Heart left ventricle (tissue), 16 donors: ENCODE measurements at regions of chr4 and their contacts with region 1.

Region 1: DNA sequence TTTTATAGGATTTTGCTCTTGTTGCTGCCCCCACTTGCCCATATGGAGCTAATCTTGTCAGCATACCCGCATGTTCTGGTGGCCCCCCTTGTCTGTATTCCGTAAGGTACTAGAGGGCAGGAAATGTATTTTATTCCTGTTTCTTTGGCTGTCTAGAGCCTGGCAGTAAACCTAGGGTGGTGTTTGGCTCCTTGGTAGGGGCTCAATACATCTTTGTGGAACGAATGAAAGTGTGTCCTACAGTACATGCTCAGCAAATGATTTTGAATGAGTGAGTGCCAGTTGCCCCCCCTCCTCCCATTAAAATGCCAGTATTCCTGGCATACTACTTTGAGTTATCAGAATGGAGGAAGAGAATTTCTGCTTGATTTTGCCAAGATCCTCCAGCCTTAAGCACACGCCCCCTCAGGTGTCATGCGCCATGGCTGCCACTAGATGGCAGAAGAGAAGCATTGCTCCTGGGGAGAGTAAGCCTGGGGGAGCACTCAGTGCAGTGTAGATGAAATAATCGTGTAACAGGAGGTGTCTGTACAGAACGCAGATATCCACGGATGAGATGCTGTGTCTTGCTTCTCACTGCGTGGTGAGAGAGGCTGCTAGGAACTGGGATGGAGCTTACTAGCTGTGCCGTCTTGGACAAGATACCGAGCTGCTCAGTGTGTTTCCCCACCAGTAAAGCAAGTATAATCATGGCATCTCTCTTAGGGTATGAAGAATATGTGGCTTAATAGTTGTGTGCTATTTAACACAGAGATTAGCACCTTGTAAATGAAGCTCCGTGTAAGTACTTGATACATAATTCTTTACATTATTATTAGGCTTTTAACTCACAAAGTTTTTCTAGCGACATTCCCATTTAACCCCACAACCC is 17.2 kb upstream of the RNF212 start:
- DNase-seq: peak in 4 of 5 donors; percentile 51 to 66 (median 56)
- ATAC-seq: peak; percentile 83 to 97 (median 94)
- H3K4me3 ChIP-seq: no peak overlapping the region
- H3K27ac ChIP-seq: no peak overlapping the region
- H3K4me1 ChIP-seq: peaks cover 0 to 3% (median 0%) of the 10 kb centered on the region in 12 donors
- H3K27me3 ChIP-seq: peaks cover 0 to 4% (median 0%) of the 10 kb centered on the region in 9 donors
- CTCF ChIP-seq: peak; percentile 98 to 100 (median 99)
- POLR2A ChIP-seq: no peak

Region 2: DNA sequence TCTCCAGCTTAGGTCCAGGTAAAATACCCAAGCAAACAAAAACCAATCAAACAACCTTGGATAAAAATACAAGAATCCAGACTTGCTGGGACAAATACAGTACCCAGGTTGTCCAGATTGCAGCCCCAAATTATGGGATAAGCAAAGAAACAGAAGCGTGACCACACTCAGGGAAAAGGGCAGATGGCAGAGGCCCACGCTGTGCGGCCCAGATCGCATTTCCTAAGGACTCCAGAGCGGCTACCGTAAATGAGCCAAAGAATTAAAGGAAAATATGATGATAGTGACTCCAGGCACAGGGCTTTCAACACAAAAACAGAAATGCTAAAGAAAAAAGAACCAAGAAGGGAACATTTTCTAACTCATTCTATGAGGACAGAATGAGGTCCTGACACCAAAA is 68.8 kb before region 1 on chr4:
- intact Hi-C with region 1: no loop called
- DNase-seq: no peak
- ATAC-seq: no peak
- H3K4me3 ChIP-seq: no peak overlapping the region
- H3K27ac ChIP-seq: no peak overlapping the region
- H3K4me1 ChIP-seq: peaks cover 0 to 13% (median 0%) of the 10 kb centered on the region in 12 donors
- H3K27me3 ChIP-seq: peaks cover 0 to 64% (median 17%) of the 10 kb centered on the region in 9 donors
- CTCF ChIP-seq: no peak
- POLR2A ChIP-seq: no peak

Region 3: DNA sequence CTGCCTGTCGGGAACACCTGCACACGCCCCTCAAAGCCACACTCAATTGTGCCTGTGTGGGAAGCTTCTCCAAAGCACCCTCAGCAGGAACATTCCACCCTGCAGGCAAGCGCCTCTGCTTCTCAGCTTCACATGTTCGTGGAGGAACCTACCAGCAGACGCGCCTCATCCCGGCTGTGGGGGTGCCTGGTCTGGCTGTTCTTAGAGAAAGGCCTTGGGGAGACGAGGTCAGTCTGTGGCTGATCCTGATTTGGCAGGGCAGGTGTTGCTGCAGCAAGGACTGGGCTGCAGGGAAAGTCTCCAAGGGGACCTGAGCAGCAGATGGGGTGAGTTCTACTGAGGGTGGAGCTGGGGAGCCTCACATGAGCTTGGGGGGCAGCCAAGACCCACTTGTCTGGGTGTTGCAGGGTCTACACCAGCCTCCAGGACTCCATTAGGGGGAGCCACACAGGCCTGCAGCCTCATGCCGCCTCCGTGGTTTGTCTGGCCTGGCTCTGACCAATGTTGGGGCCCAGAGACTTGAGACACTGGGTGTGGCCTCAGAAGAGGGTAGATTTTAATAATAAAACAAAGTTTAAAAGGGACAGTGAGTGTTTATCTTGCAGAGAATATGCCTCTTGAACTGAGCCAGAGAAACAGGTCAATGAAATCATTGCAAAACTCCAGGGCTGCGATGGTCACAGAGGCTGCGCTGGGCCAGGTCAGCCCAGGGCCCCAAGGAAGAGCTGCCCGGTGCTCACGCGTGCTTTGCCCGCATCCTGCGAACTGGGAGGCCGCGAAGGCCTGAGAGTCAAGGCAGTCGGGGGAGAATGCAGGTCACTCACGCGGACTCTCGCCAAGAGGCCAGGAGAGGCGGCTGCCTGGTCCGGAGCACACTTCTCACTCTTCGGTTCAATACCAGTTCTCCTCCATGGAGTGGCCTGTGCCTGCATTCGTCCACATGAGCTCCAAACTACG is 38.2 kb before region 1 on chr4:
- intact Hi-C with region 1: no loop called
- DNase-seq: no peak
- ATAC-seq: no peak
- H3K4me3 ChIP-seq: no peak overlapping the region
- H3K27ac ChIP-seq: no peak overlapping the region
- H3K4me1 ChIP-seq: no peaks in the 10 kb centered on the region
- H3K27me3 ChIP-seq: peaks cover 0 to 4% (median 0%) of the 10 kb centered on the region in 9 donors
- CTCF ChIP-seq: no peak
- POLR2A ChIP-seq: no peak

Region 4: DNA sequence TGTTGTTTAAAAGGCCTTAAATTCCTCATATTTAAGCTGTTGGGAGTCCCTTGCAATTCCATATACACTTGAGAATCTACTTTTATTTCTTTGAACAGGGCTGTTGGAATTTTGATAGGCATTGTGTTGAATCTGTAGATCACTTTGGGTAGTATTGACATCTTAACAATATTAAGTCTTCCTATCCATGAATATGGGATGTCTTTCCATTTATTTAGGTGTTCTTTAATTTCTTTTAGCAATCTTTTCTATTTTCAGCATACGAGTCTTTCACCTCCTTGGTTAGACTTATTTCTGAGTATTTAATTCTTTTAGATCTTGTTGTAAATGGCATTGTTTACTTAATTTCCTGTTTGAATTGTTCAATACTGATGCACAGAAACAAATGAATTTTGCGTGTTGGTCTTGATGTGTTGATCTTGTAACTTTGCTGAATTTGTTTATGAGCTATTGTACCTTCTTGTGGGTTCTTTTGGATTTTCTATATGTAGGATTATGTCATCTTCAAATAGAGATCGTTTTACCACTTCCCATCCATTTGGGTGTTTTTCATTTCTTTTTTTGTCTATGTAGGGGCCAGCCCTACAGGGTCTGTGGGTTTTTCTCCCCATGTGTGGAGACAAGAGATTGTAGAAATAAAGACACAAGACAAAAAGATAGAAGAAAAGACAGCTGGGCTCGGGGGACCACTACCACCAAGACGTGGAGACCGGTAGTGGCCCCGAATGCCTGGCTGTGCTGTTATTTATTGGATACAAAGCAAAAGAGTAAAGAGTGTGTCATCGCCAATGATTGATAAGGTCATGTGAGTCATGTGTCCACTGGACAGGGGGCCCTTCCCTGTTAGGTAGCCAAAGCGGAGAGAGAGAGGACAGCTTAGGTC is 136.6 kb after region 1 on chr4:
- intact Hi-C with region 1: loop called in 8 of 10 experiments (anchors 1 to 5 kb)
- DNase-seq: no peak
- ATAC-seq: no peak
- H3K4me3 ChIP-seq: no peak overlapping the region
- H3K27ac ChIP-seq: peak overlapping the region in 1 of 12 donors; percentile 52
- H3K4me1 ChIP-seq: no peaks in the 10 kb centered on the region
- H3K27me3 ChIP-seq: no peaks in the 10 kb centered on the region
- CTCF ChIP-seq: no peak
- POLR2A ChIP-seq: no peak

Region 5: DNA sequence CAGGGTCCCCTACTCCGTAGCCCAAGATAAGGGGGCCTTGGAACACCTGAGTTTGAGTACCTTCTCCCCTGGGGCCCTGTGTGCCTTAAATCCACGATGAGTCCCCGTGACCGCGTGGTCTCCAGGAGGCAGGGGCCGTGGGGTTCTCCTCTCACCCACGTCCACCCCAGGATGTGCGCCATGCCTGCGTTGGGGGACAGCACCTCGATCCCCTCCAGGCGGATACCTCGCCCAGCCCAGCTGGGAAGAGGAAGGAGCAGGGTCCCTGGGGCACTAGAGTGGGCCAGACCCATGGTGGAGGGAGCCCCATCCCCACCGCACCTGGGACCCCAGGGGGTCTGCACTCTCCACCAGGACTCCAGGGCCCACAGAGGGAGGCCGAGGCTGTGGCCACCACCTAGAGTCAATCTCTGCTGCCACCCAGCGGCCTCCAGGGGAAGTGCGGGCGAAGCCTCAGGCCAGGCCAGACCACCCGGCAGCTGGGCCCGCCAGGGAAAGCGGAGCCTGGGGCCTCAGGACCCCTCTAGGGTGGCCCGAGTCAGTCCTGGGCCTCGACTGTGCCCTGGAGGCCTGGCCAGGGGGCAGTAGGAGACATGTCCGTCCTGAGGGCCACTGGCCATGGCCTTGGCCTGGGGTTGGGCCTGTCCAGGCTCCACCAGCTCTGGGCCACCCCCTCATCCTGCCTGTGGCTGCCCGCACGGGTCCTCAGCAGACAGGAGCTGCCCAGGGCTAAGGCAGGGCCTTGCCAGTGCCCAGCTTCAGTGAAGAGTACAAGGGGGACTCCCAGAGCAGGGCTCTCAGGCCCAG is 498.5 kb after region 1 on chr4:
- intact Hi-C with region 1: loop called in 2 of 10 experiments (anchors 10 kb)
- DNase-seq: peak; percentile 46 to 82 (median 63)
- ATAC-seq: peak; percentile 53 to 84 (median 78)
- H3K4me3 ChIP-seq: no peak overlapping the region
- H3K27ac ChIP-seq: no peak overlapping the region
- H3K4me1 ChIP-seq: peaks cover 0 to 10% (median 0%) of the 10 kb centered on the region in 12 donors
- H3K27me3 ChIP-seq: no peaks in the 10 kb centered on the region
- CTCF ChIP-seq: peak; percentile 88 to 99 (median 97)
- POLR2A ChIP-seq: no peak